ENCODE measurements at regions of chr2 and their contacts with region 1.

Region 1: DNA sequence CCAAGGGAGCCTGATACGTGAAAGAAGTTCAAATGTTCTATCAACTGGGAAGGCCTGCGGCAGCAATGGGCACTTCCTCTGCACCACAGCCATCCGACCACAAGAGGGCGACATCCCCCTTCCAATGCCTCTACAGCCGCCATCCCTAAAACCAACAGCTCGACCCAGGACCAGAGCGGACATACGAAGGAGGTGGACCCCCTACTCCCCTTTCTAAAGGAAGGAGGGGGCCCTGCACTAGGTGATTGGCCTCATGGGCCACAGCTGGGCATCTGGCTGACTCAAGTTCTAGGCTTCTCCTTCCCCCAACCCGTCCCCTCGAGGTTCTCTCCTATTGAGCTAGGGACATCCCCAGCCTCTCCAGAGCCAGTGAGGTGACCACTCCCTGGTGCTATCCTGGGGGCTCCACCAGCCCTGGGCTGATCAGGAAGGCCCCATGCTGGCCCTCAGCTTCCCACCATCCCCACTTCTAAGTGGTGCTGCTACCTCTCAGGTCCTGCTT is 217.2 kb downstream of the TNS1 start:
- DNase-seq: no peak
- H3K4me3 ChIP-seq: no peak overlapping the region
- CTCF ChIP-seq: peak; percentile 92

Region 2: DNA sequence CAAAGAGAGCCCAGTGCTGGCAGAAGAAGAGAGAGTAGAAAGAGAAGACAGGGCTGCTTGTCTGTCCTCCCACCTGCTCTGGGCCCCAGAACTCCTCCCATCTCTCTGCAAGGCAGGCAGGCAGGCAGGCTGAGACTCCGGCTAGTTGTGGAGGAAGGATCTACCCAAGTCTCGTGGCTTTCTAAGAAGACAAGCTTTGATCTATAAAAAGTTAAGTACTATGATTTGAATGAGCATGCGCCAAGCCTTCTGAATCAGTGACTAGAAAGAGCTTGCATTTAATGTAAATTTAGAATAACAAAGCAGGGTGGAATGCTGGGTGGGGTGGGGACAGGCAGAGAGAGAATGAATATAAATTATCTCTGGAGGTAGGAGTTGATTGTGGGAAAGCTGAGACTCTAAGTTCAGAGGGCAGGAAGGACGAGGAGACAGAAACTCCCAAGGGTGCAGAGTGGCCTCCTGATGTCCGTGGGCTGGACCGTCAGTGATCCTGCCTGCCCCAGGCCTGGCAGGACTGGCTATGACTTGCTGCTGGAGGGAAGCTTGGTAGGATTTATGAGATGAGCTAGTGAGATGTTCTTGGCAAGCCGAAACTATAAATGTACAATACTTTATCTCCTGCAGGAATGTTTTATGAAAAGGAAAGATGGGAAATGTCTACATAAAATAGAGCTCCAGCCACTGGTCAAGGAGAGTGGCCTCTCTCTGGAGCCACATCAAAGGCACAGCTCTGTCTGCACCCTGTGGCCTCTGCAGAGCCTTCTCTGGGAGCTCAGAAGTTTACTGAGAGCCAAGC is 230.3 kb before region 1 on chr2:
- CTCF ChIA-PET with region 1: no interaction called
- POLR2A ChIA-PET with region 1: no interaction called
- DNase-seq: no peak
- H3K4me3 ChIP-seq: no peak overlapping the region
- CTCF ChIP-seq: no peak

Region 3: GRCh38 chr2:217798743-217799562 is 13.4 kb after region 1 on chr2:
- CTCF ChIA-PET with region 1: interaction called, 48 read pairs
- POLR2A ChIA-PET with region 1: no interaction called
- DNase-seq: no peak
- H3K4me3 ChIP-seq: no peak overlapping the region
- CTCF ChIP-seq: no peak

Region 4: DNA sequence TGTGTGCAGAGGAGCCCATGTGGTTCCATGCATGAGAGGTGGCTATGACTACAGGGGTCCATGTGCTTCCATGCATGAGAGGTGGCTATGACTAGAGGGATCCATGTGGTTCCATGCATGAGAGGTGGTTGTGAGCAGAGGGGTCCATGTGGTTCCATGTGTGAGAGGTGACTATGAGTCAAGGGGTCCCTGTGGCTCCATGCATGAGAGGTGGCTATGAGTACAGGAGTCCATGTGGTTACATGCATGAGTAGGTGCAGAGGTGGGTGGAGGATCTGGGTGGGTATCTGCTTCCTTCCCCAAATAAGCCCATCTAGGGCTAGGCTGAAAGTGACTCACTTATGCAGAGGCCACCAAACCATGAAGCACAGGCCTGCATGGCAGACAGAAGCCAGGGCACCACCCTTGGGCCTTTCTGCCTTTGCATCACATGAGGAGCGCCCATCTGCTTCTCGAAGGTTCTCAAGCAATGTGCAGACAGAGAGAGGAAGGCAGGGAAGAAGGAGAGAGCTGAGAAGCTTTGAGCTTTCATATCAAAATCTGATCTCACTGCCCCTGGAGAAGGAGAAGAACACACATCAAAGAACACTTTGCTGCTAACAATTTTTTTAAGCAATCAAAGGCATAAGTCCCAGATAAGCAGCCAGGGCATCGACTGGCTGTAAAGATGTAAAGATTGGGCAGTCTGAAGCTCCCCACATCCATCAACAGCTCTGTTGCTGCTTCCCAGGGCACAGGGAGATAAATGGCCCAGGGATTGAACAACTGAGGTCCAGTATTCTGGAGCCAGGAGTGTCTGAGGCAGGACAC is 79.6 kb after region 1 on chr2:
- CTCF ChIA-PET with region 1: interaction called, 16 read pairs
- POLR2A ChIA-PET with region 1: no interaction called
- DNase-seq: no peak
- H3K4me3 ChIP-seq: no peak overlapping the region
- CTCF ChIP-seq: no peak

Region 5: GRCh38 chr2:217899231-217900009 is 113.8 kb after region 1 on chr2:
- CTCF ChIA-PET with region 1: interaction called, 11 read pairs
- POLR2A ChIA-PET with region 1: no interaction called
- DNase-seq: no peak
- H3K4me3 ChIP-seq: no peak overlapping the region
- CTCF ChIP-seq: peak; percentile 85

Region 6: DNA sequence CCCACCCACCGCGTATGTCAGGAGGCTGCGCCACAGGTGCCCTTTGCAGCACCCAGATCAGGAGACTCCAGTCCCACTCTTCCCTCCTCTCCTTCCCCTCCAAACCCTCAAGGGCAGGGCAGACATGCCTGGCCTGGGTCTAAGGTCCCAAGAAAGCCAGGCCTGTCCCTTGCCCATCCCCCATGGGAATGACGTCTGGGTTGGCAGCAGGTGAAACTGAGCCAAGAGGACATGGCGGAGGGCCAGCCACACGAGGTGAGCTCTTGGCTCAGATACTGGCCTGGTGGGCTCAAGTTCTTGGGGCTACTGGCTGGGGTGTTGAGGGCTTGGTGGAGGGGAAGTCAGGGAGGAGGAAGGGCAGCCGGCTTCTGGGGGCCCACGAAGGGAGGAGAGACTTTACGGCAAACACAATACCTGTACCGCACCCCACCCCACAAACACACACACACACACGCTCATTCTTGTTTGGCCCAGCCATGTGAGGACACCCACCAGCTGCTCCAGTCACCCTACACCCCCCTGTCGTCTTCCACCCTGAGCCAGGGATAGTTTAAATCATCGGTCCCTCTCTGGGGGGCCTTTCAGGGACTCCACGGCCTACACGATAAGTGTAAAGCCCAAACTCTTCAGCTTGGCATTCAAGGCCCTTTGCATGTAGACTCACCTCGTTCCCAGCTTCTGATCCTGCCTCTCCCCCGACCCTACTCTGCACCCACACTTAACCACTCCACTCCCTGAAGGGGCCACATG is 241.3 kb after region 1 on chr2:
- CTCF ChIA-PET with region 1: interaction called, 101 read pairs
- POLR2A ChIA-PET with region 1: no interaction called
- DNase-seq: no peak
- H3K4me3 ChIP-seq: no peak overlapping the region
- CTCF ChIP-seq: no peak

Region 7: GRCh38 chr2:218063486-218063885 is 277.9 kb after region 1 on chr2:
- CTCF ChIA-PET with region 1: interaction called, 64 read pairs
- POLR2A ChIA-PET with region 1: no interaction called
- DNase-seq: no peak
- H3K4me3 ChIP-seq: no peak overlapping the region
- CTCF ChIP-seq: no peak

Region 8: GRCh38 chr2:218429571-218430301 is 644.1 kb after region 1 on chr2:
- CTCF ChIA-PET with region 1: no interaction called
- POLR2A ChIA-PET with region 1: no interaction called
- DNase-seq: no peak
- H3K4me3 ChIP-seq: no peak overlapping the region
- CTCF ChIP-seq: no peak